Naive thymus-derived CD4-positive, alpha-beta T cell (primary cell): ENCODE measurements at regions of chr5 and their contacts with region 1.

Region 1: GRCh38 chr5:81105261-81105877 is 127.8 kb upstream of the CKMT2 start:
- DNase-seq: no peak
- ATAC-seq: no peak
- H3K4me3 ChIP-seq: no peak overlapping the region
- H3K4me3 Mint-ChIP-seq: peak overlapping the region in 3 of 10 donors; percentile 31 to 47 (median 45)
- H3K27ac ChIP-seq: no peak overlapping the region
- H3K27ac Mint-ChIP-seq: peak overlapping the region; percentile 21 to 86 (median 64)
- H3K4me1 ChIP-seq: peaks cover 12% of the 10 kb centered on the region in 2 donors
- H3K4me1 Mint-ChIP-seq: peaks cover 10 to 40% (median 33%) of the 10 kb centered on the region in 7 donors
- H3K27me3 ChIP-seq: no peaks in the 10 kb centered on the region
- H3K27me3 Mint-ChIP-seq: no peaks in the 10 kb centered on the region

Region 2: GRCh38 chr5:80686757-80687156 is 418.6 kb before region 1 on chr5:
- CTCF ChIA-PET with region 1: interaction called, 13 read pairs
- POLR2A ChIA-PET with region 1: no interaction called
- intact Hi-C with region 1: loop called (anchors 1 kb)
- DNase-seq: peak in 5 of 9 donors; percentile 11 to 42 (median 19)
- ATAC-seq: no peak
- H3K4me3 ChIP-seq: no peak overlapping the region
- H3K4me3 Mint-ChIP-seq: no peak overlapping the region
- H3K27ac ChIP-seq: no peak overlapping the region
- H3K27ac Mint-ChIP-seq: no peak overlapping the region
- H3K4me1 ChIP-seq: no peaks in the 10 kb centered on the region
- H3K4me1 Mint-ChIP-seq: peaks cover 7 to 35% (median 14%) of the 10 kb centered on the region in 7 donors
- H3K27me3 ChIP-seq: no peaks in the 10 kb centered on the region
- H3K27me3 Mint-ChIP-seq: no peaks in the 10 kb centered on the region

Region 3: DNA sequence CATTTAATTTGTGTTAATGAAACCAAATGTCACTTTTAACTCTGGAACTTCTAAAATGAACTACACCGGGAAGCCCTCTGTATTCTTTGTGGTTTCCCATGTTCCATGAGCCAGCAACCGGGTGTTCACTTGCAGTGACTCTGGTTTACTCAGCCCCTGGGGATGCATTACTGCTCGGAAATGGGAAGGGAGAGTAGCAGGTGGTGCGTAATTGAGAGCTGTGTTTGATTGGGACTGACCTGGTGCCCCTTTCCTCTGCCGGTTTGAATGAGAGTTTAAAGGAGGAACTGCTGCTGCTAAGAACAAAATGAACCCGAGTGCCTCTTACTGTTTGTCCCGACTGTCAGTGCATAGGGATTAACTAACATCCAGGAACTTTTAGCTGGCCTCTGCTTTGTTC is 350.5 kb before region 1 on chr5:
- CTCF ChIA-PET with region 1: interaction called, 3 read pairs
- POLR2A ChIA-PET with region 1: no interaction called
- intact Hi-C with region 1: loop called in 1 of 2 experiments (anchors 2 kb)
- DNase-seq: peak in 2 of 9 donors; percentile 11 to 49
- ATAC-seq: no peak
- H3K4me3 ChIP-seq: peak overlapping the region; percentile 7
- H3K4me3 Mint-ChIP-seq: peak overlapping the region; percentile 49 to 87 (median 78)
- H3K27ac ChIP-seq: peak overlapping the region; percentile 57
- H3K27ac Mint-ChIP-seq: peak overlapping the region; percentile 45 to 93 (median 79)
- H3K4me1 ChIP-seq: peaks cover 20 to 28% of the 10 kb centered on the region in 2 donors
- H3K4me1 Mint-ChIP-seq: peaks cover 30 to 61% (median 47%) of the 10 kb centered on the region in 7 donors
- H3K27me3 ChIP-seq: no peaks in the 10 kb centered on the region
- H3K27me3 Mint-ChIP-seq: no peaks in the 10 kb centered on the region

Region 4: DNA sequence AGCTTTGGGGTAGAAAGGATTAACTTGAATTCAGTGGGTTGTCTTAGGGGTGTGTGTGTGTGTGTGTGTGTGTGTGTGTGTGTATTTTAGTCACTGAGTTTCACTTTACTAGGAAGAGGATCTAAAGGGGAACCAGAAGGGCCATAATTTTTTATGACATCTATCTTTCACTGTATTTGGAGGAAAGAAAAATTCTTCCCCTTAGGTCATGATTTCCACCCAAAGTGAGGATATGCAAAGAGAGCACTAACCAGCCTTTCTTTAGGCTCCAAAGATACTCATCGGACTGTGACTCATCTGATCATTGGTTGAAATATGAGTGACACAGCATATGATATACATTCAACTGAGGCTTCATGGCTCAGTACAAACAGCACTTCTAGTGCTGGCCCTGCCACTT is 220.4 kb before region 1 on chr5:
- CTCF ChIA-PET with region 1: no interaction called
- POLR2A ChIA-PET with region 1: no interaction called
- intact Hi-C with region 1: loop called in 1 of 2 experiments (anchors 5 kb)
- DNase-seq: no peak
- ATAC-seq: no peak
- H3K4me3 ChIP-seq: no peak overlapping the region
- H3K4me3 Mint-ChIP-seq: no peak overlapping the region
- H3K27ac ChIP-seq: no peak overlapping the region
- H3K27ac Mint-ChIP-seq: peak overlapping the region in 6 of 9 donors; percentile 6 to 69 (median 42)
- H3K4me1 ChIP-seq: no peaks in the 10 kb centered on the region
- H3K4me1 Mint-ChIP-seq: peaks cover 0 to 19% (median 6%) of the 10 kb centered on the region in 7 donors
- H3K27me3 ChIP-seq: no peaks in the 10 kb centered on the region
- H3K27me3 Mint-ChIP-seq: no peaks in the 10 kb centered on the region

Region 5: DNA sequence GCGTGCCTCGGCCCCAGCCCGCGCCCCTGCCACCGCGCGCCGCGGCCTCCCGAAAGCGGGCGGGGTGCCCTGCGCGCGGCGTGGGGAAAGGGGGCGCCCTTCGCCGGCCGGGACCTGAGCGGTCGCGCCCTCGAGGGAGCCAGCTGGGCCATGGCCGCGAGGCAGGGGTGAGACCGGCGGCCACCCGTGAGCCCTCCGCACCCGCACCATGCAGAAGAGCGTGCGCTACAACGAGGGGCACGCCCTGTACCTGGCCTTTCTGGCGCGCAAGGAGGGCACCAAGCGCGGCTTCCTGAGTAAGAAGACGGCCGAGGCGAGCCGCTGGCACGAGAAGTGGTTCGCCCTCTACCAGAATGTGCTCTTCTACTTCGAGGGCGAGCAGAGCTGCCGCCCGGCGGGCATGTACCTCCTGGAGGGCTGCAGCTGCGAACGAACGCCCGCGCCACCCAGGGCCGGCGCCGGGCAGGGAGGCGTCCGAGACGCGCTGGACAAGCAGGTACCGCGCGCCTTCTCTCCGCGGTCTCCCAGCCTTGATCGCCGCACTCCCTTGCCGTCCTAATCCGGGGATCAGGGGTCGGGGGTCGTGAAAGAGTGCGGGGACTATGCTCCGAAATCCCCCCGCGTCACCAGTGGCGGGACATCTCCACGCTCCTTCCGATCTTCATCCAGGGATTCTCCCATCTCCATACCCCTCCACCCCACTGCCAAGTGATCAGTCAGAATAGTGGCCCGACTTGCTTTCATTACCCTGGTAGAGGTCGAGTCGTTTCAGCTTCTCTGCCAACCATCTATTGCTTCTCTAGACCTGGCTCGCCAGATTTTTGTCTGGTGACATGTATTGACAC is 144.6 kb before region 1 on chr5:
- CTCF ChIA-PET with region 1: interaction called, 17 read pairs
- POLR2A ChIA-PET with region 1: interaction called, 3 read pairs
- intact Hi-C with region 1: loop called (anchors 1 kb)
- DNase-seq: peak in 8 of 9 donors; percentile 23 to 67 (median 50)
- ATAC-seq: peak; percentile 53
- H3K4me3 ChIP-seq: peak overlapping the region; percentile 85
- H3K4me3 Mint-ChIP-seq: peak overlapping the region; percentile 87 to 99 (median 94)
- H3K27ac ChIP-seq: peak overlapping the region; percentile 70
- H3K27ac Mint-ChIP-seq: peak overlapping the region; percentile 79 to 98 (median 88)
- H3K4me1 ChIP-seq: peaks cover 22 to 35% of the 10 kb centered on the region in 2 donors
- H3K4me1 Mint-ChIP-seq: peaks cover 35 to 76% (median 63%) of the 10 kb centered on the region in 7 donors
- H3K27me3 ChIP-seq: no peaks in the 10 kb centered on the region
- H3K27me3 Mint-ChIP-seq: peaks cover 0 to 12% (median 5%) of the 10 kb centered on the region in 5 donors

Region 6: GRCh38 chr5:81121273-81121672 is 15.9 kb after region 1 on chr5:
- CTCF ChIA-PET with region 1: interaction called, 13 read pairs
- POLR2A ChIA-PET with region 1: no interaction called
- intact Hi-C with region 1: no loop called
- DNase-seq: no peak
- ATAC-seq: no peak
- H3K4me3 ChIP-seq: no peak overlapping the region
- H3K4me3 Mint-ChIP-seq: no peak overlapping the region
- H3K27ac ChIP-seq: no peak overlapping the region
- H3K27ac Mint-ChIP-seq: peak overlapping the region in 2 of 9 donors; percentile 65 to 75
- H3K4me1 ChIP-seq: peaks cover 0 to 5% of the 10 kb centered on the region in 2 donors
- H3K4me1 Mint-ChIP-seq: peaks cover 4 to 32% (median 20%) of the 10 kb centered on the region in 7 donors
- H3K27me3 ChIP-seq: no peaks in the 10 kb centered on the region
- H3K27me3 Mint-ChIP-seq: no peaks in the 10 kb centered on the region

Region 7: DNA sequence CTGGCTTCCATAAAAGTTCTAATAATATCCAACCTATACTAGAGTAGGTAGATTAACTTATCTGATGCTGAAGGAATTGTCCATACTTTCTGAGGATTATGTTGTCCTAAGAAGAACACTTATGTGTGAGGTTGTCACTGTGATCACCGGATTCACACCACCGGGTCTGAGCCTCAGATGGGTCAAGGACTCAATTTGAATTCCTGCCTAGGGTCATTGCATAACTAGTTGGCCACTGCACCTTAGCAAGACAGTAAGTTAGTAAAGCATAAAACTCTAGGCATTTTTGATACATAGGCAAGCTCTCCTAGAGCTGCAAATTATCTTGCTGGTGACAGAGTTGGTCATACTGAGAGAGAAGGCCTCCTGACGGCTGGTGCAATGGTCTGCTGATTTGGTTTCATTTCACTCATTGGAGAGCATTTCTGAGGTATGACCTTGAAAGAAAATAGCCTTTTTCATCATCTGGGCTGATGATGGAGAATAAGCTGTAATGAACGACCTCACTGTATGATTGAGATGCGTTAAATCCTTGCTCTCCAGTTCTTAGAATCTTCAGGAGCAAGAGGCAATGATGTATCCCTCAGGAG is 55.7 kb after region 1 on chr5:
- CTCF ChIA-PET with region 1: no interaction called
- POLR2A ChIA-PET with region 1: no interaction called
- intact Hi-C with region 1: no loop called
- DNase-seq: no peak
- ATAC-seq: no peak
- H3K4me3 ChIP-seq: no peak overlapping the region
- H3K4me3 Mint-ChIP-seq: no peak overlapping the region
- H3K27ac ChIP-seq: no peak overlapping the region
- H3K27ac Mint-ChIP-seq: peak overlapping the region in 1 of 9 donors; percentile 36
- H3K4me1 ChIP-seq: no peaks in the 10 kb centered on the region
- H3K4me1 Mint-ChIP-seq: peaks cover 0 to 5% (median 0%) of the 10 kb centered on the region in 7 donors
- H3K27me3 ChIP-seq: no peaks in the 10 kb centered on the region
- H3K27me3 Mint-ChIP-seq: no peaks in the 10 kb centered on the region

Region 8: GRCh38 chr5:81506900-81507588 is 401.7 kb after region 1 on chr5:
- CTCF ChIA-PET with region 1: no interaction called
- POLR2A ChIA-PET with region 1: no interaction called
- intact Hi-C with region 1: no loop called
- DNase-seq: peak in 7 of 9 donors; percentile 34 to 66 (median 55)
- ATAC-seq: peak; percentile 96
- H3K4me3 ChIP-seq: no peak overlapping the region
- H3K4me3 Mint-ChIP-seq: no peak overlapping the region
- H3K27ac ChIP-seq: no peak overlapping the region
- H3K27ac Mint-ChIP-seq: no peak overlapping the region
- H3K4me1 ChIP-seq: no peaks in the 10 kb centered on the region
- H3K4me1 Mint-ChIP-seq: peaks cover 0 to 27% (median 8%) of the 10 kb centered on the region in 7 donors
- H3K27me3 ChIP-seq: no peaks in the 10 kb centered on the region
- H3K27me3 Mint-ChIP-seq: no peaks in the 10 kb centered on the region